MCF 10A (cell line): ENCODE measurements at regions of chr17 and their contacts with region 1.

Region 1: GRCh38 chr17:40026816-40027613 is 11.8 kb downstream of the CSF3 start:
- DNase-seq: peak; percentile 95
- H3K4me3 Mint-ChIP-seq: peak overlapping the region; percentile 52
- H3K27ac Mint-ChIP-seq: peak overlapping the region; percentile 87
- H3K4me1 Mint-ChIP-seq: peaks cover 47% of the 10 kb centered on the region
- H3K27me3 Mint-ChIP-seq: no peaks in the 10 kb centered on the region
- CTCF ChIP-seq: peak; percentile 91

Region 2: GRCh38 chr17:39872751-39873150 is 154.3 kb before region 1 on chr17:
- CTCF ChIA-PET with region 1: no interaction called
- POLR2A ChIA-PET with region 1: interaction called, 3 read pairs
- intact Hi-C with region 1: loop called (anchors 5 kb)
- DNase-seq: peak; percentile 24
- H3K4me3 Mint-ChIP-seq: no peak overlapping the region
- H3K27ac Mint-ChIP-seq: no peak overlapping the region
- H3K4me1 Mint-ChIP-seq: no peaks in the 10 kb centered on the region
- H3K27me3 Mint-ChIP-seq: peaks cover 41% of the 10 kb centered on the region
- CTCF ChIP-seq: no peak

Region 3: DNA sequence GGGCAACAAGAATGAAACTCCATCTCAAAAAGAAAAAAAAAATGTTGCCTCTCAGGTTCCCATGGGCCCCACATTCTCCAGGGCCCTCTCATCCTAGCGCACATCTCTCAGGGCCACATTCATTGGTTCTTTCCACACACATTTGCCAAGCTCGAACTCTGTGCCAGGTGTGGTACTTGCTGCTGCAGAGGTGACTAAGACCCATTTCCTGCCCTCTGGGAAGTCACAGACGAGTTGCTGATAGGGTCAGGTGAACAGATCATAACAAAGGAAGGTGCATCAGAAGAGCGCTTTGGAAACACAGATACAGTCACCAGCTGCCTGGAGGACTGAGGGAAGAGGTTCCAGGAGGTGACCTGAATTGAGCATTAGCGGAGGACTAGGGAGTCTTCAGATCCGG is 63.2 kb before region 1 on chr17:
- CTCF ChIA-PET with region 1: no interaction called
- POLR2A ChIA-PET with region 1: no interaction called
- intact Hi-C with region 1: loop called (anchors 1 kb)
- DNase-seq: peak; percentile 77
- H3K4me3 Mint-ChIP-seq: no peak overlapping the region
- H3K27ac Mint-ChIP-seq: no peak overlapping the region
- H3K4me1 Mint-ChIP-seq: peaks cover 17% of the 10 kb centered on the region
- H3K27me3 Mint-ChIP-seq: peaks cover 6% of the 10 kb centered on the region
- CTCF ChIP-seq: no peak

Region 4: DNA sequence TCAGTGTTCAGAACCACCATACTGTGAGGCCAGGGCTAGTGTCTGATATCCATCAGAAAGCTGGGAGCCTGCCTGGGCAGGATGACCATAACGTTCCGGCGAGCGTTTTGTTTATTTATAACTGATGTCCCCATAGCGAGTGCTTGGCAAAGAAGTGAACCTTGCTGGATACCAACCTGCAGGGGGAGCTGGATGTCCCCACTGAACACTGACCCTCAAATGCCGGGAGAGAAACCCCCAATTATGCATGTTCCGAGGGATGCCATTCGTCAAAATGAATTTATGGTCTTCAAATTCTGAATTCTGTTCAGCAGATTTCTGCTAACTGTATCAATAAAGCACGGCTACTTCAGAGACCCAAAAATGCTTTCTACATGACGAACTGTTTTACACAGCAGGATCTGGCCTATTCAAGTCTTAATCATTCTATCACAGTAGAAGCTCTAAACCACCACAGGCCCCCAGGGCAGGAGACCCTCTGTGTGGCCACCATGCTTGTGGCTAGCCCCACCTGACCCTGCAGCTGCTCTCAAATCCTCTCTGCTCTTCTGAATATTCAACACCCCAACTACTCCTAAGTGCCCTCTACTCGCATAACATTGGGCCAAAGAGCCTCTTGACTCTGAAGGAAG is 12.0 kb after region 1 on chr17:
- CTCF ChIA-PET with region 1: interaction called, 30 read pairs
- POLR2A ChIA-PET with region 1: interaction called, 3 read pairs
- intact Hi-C with region 1: no loop called
- DNase-seq: peak; percentile 63
- H3K4me3 Mint-ChIP-seq: no peak overlapping the region
- H3K27ac Mint-ChIP-seq: no peak overlapping the region
- H3K4me1 Mint-ChIP-seq: peaks cover under 1% of the 10 kb centered on the region
- H3K27me3 Mint-ChIP-seq: no peaks in the 10 kb centered on the region
- CTCF ChIP-seq: peak; percentile 35

Region 5: GRCh38 chr17:40075201-40075941 is 48.4 kb after region 1 on chr17:
- CTCF ChIA-PET with region 1: interaction called, 19 read pairs
- POLR2A ChIA-PET with region 1: interaction called, 5 read pairs
- intact Hi-C with region 1: no loop called
- DNase-seq: peak; percentile 78
- H3K4me3 Mint-ChIP-seq: peak overlapping the region; percentile 65
- H3K27ac Mint-ChIP-seq: peak overlapping the region; percentile 36
- H3K4me1 Mint-ChIP-seq: peaks cover 62% of the 10 kb centered on the region
- H3K27me3 Mint-ChIP-seq: no peaks in the 10 kb centered on the region
- CTCF ChIP-seq: peak; percentile 89

Region 6: DNA sequence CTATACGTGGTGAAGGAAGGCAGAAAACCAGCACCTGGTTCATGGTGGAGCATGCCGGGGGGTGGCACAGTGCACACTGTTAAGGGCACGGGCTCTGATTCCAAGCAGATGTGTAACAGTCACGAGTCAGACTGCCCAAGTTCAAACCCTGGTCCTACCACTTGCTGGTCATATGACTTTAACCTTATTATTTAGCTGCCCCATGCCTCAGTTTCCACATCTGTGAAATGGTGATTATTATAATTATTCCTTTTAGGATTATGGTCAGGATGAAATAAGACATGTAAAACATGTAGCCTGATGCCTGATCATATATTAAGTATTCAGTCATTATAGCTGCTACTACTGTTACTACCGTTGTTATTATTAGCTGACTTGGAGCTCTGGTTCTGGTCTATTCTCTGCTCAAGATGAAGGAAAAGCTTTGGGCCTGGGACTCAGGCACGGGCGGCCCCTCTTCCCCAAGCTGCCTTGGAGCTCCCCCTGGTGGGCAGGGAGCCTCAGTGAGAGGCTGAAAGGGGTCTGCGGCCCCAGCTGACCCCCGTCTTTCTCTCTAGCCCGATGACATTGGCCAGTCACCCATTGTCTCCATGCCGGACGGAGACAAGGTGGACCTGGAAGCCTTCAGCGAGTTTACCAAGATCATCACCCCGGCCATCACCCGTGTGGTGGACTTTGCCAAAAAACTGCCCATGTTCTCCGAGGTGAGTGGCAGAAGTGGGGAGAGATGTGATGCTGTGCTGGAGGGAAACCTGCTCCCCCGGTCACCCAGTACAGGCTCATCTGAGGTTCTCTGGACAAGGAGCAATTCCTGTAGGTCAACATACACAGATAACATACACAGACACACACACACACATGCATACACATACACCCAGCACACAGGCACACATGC is 59.4 kb after region 1 on chr17:
- CTCF ChIA-PET with region 1: interaction called, 10 read pairs
- POLR2A ChIA-PET with region 1: interaction called, 3 read pairs
- intact Hi-C with region 1: no loop called
- DNase-seq: peak; percentile 61
- H3K4me3 Mint-ChIP-seq: no peak overlapping the region
- H3K27ac Mint-ChIP-seq: no peak overlapping the region
- H3K4me1 Mint-ChIP-seq: no peaks in the 10 kb centered on the region
- H3K27me3 Mint-ChIP-seq: no peaks in the 10 kb centered on the region
- CTCF ChIP-seq: peak; percentile 81